Activated CD4-positive, alpha-beta memory T cell treated with anti-CD3 and anti-CD28 coated beads for 36 hours (primary cell): ENCODE measurements at regions of chr2 and their contacts with region 1.

Region 1: DNA sequence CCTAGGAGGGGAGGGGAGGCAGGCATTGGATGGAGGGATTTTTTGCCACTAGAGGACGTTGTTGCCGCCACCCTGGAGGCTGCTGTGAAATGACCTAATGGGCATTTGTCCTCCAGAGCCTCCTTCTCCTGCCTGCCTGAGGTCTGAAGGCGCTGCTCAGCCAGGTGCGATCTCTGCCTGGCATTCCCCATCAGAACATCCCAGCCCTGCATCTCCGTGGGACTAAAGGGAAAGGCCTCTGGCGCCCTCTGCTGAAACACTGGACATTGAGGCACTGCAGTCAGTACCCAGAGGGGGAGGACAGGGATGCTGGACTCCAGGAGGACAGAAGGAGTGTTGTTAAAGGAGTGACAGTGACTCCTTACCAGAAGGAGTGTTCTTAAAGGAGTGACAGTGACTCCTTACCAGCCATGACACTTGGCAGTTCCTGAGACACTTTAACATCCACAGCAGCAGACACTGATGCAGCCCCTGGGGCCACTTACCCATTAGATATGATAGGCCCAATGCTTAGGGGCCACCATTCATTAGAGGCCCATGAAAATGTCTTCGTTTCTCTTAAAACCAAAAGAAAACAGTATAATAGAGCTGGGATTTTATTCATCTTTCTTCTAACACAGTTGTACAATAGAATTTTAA is 17.0 kb downstream of the THNSL2 start:
- DNase-seq: peak; percentile 61
- H3K4me3 Mint-ChIP-seq: no peak overlapping the region
- H3K27ac Mint-ChIP-seq: no peak overlapping the region
- H3K4me1 Mint-ChIP-seq: peaks cover 1% of the 10 kb centered on the region
- H3K27me3 Mint-ChIP-seq: peaks cover 11% of the 10 kb centered on the region

Region 2: DNA sequence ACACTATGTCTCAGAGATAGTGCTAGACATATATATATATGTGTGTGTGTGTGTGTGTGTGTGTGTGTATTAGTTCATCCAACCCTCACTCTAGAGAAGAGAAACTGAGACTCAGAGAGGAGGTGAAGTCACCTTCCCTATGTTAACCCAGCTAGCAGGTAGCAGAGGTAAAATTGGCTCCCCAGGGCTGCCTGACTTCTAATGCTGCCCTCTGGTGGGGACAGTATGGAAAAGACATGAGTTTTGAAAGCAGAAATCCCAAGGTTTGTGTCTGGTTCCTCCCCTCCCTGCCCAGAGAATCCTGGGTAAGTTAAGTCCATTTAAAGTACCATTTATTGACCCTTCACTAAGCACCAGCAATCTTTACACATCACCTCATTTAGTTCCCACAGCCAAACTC is 120.7 kb after region 1 on chr2:
- CTCF ChIA-PET with region 1: interaction called, 4 read pairs
- POLR2A ChIA-PET with region 1: no interaction called
- intact Hi-C with region 1: loop called (anchors 5 kb)
- DNase-seq: peak; percentile 16
- H3K4me3 Mint-ChIP-seq: no peak overlapping the region
- H3K27ac Mint-ChIP-seq: no peak overlapping the region
- H3K4me1 Mint-ChIP-seq: no peaks in the 10 kb centered on the region
- H3K27me3 Mint-ChIP-seq: peaks cover 13% of the 10 kb centered on the region